ENCODE measurements at regions of chr7 and their contacts with region 1.

Region 1: GRCh38 chr7:148107443-148108127 is 483.0 kb upstream of the C7orf33 start:
- DNase-seq: no peak

Region 2: GRCh38 chr7:146255609-146256008 is 1852.0 kb before region 1 on chr7:
- intact Hi-C with region 1: loop called in 1 of 2 experiments (anchors 5 kb)
- DNase-seq: no peak

Region 3: GRCh38 chr7:148095066-148095465 is 12.5 kb before region 1 on chr7:
- intact Hi-C with region 1: no loop called
- DNase-seq: no peak

Region 4: DNA sequence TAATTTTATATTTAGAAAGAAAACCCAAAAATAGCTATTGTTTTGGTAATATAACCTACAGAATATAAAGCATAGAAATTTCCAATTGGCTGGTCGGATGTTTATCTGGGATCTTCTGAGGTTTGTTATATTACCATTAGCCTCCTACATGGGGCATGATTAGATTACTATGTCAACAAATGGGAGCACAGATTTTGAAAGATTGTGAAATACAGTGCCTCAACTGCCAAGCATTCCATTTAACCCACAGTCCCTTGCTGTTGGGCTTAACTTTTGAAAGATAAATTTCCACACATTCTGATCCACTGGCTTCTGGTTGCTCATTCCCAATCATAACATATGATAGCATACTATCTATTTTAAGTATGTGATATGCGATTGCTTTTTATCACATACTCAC is 27.5 kb after region 1 on chr7:
- intact Hi-C with region 1: no loop called
- DNase-seq: no peak

Region 5: DNA sequence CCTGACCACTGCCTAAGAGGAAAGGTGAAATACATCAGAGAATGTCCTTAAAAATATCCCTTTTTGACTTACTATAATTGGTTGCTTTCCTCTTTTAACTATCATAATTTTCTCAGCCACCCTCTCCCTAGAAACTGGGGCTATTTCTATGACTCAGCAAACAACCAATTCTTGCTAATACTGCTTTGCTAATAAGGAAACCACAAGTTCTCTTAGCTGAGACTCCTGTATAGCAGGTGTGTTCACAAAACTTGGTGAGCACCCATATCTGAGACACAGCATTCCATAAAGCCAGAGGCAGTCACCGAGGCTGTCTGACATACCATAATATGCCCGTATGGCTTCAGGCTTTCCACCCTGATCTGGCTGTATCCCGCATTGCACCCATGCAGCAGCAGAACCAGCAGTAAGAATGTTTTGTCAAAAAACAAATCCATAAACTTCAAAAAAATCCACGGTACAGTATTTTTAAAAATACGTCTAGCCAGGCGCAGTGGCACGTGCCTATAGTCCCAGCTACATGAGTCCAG is 291.3 kb after region 1 on chr7:
- intact Hi-C with region 1: no loop called
- DNase-seq: no peak